SK-N-SH (cell line): ENCODE measurements at regions of chr17 and their contacts with region 1.

Region 1: DNA sequence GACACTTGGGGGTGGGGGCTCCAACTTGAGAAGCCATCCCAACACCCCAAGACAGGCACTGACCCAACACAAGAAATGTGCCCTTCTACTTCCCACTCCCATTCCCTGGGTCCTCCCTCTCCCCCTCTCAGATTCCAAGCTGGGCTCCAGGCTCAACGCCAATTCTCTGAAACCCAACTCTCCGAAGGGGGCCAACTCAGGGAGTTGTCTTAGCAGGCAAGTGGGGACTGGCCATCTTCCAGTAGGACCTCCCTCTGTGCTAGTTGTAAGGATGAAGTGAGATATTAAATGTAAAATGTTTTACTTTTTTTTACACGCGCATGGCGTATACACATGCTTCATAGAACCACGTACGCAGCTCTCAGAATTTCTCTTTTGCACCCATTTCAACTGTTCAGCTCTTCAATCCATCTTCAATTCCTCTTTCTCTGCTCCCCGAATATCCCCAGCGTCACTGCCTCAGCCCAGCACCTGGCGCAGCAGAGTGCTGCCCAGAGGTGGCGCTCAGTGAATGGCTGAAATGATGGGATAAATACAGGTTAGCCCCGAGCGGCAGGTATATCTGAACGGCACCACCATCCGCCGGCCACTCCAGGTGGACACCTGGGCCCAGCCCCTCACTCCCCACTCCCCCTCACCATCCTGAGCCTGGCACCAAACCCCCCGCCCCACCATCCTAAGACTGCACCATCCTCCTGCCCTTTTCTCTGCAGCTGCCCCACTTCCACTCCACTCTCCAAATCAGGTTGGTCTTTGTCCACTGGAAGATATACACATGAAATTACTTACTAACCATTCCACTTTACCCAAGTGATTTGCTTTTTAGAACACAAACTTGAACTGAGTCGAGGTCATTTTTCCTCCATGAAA is 43.9 kb upstream of the TNRC6C start:
- DNase-seq: no peak
- H3K4me3 ChIP-seq: no peak overlapping the region
- H3K27ac ChIP-seq: no peak overlapping the region
- H3K4me1 ChIP-seq: peaks cover 0 to 21% of the 10 kb centered on the region in 2 experiments; a peak in 2 of 4 replicates
- H3K27me3 ChIP-seq: peaks cover 41% of the 10 kb centered on the region
- CTCF ChIP-seq: no peak
- EP300 ChIP-seq: no peak
- RAD21 ChIP-seq: peak; percentile 35

Region 2: DNA sequence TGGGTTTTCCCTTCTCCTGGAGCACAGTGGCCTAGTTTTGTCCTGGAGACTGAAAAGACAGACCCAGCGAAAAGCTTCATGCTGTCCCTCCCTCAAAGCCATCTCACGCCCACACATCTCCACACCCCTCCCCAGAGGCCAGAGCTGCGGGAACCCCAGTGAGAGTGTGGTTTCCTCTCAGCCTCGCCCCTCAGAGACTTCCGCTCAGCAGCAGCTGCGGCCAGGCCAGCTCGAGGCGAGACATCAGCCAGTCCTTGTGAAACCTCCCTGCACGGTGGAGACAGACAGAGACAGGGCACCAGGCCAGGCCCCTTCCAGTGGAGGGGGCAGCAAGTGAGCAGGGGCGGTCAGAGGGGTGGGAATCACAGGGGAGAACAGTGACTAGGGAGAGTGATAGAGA is 33.1 kb before region 1 on chr17:
- CTCF ChIA-PET with region 1: interaction called, 10 read pairs
- POLR2A ChIA-PET with region 1: interaction called, 6 read pairs
- DNase-seq: peak; percentile 86
- H3K4me3 ChIP-seq: no peak overlapping the region
- H3K27ac ChIP-seq: peak overlapping the region; percentile 31 to 100; a peak in 3 of 4 replicates
- H3K4me1 ChIP-seq: peaks cover 14 to 67% of the 10 kb centered on the region in 2 experiments
- H3K27me3 ChIP-seq: 0 out of 2 replicates have a peak, but pooled peaks cover 6% of the 10 kb centered on the region
- CTCF ChIP-seq: no peak
- EP300 ChIP-seq: peak in 1 of 2 experiments; percentile 75; a peak in 2 of 4 replicates
- RAD21 ChIP-seq: peak; percentile 50

Region 3: GRCh38 chr17:77892469-77893143 is 22.0 kb before region 1 on chr17:
- CTCF ChIA-PET with region 1: interaction called, 20 read pairs
- POLR2A ChIA-PET with region 1: interaction called, 3 read pairs
- DNase-seq: peak; percentile 77
- H3K4me3 ChIP-seq: 0 out of 4 replicates have a peak overlapping the region, but pooled peaks of 1 of the 2 experiments have one; percentile 27
- H3K27ac ChIP-seq: no peak overlapping the region
- H3K4me1 ChIP-seq: peaks cover 0 to 3% of the 10 kb centered on the region in 2 experiments; a peak in 1 of 4 replicates
- H3K27me3 ChIP-seq: peaks cover 2% of the 10 kb centered on the region; the same call in 1 of the 2 replicates
- CTCF ChIP-seq: peak; percentile 55
- EP300 ChIP-seq: no peak
- RAD21 ChIP-seq: peak; percentile 40; the same call in 1 of the 2 replicates

Region 4: DNA sequence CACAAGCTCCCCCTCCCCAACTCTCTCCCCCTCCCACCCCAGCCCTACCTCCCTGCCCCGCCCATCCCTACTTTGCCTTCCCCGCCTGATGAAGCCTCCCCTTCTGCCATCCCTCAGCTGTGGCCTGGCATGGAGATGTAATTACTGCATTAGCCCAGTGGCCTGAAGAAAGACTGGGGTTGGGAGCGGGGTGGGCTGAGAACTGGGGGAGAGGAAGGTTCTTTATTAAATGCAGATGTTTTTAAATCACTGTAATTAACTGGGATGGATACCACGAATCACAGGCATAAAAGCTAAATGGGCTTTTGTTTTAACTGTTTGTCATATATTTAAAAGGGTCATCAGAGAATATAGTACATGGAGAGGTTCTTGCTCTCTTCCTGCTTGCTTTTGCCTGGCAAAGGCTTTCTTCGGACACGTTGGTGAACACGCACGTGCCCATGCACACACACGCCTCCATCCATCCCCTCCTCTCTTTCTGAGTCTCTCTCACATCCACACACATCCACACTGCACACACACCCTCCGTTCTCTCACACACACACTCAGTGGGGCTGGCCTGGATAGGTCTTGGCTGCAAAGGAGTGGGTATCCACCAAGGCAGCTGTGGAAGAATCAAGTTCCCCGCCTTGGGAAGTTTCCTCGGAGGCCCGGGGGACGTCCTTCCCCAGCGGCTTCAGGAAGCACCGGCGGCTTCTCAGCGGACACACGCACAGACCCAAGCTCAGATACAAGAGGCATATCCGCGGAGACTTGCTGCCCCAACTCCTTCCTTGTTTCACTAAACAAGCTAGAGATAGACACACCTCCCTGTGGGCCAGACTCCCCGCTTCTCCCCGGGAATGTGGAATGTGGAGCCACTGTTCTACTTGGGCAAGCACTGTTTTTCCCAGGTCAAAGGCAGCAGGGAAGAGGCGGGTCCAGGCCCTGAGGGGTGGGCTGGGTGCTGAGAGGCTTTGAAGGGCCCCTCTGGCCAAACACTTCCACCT is 16.5 kb after region 1 on chr17:
- CTCF ChIA-PET with region 1: interaction called, 10 read pairs
- POLR2A ChIA-PET with region 1: interaction called, 7 read pairs
- DNase-seq: peak; percentile 95
- H3K4me3 ChIP-seq: no peak overlapping the region
- H3K27ac ChIP-seq: peak overlapping the region in 1 of 2 experiments; percentile 78; a peak in 2 of 4 replicates
- H3K4me1 ChIP-seq: peaks cover 0 to 34% of the 10 kb centered on the region in 2 experiments; a peak in 1 of 4 replicates
- H3K27me3 ChIP-seq: peaks cover 23% of the 10 kb centered on the region
- CTCF ChIP-seq: no peak
- EP300 ChIP-seq: peak in 1 of 2 experiments; percentile 83; a peak in 2 of 4 replicates
- RAD21 ChIP-seq: peak; percentile 38

Region 5: GRCh38 chr17:77942112-77942988 is 27.7 kb after region 1 on chr17:
- CTCF ChIA-PET with region 1: no interaction called
- POLR2A ChIA-PET with region 1: no interaction called
- DNase-seq: no peak
- H3K4me3 ChIP-seq: no peak overlapping the region
- H3K27ac ChIP-seq: no peak overlapping the region
- H3K4me1 ChIP-seq: no peaks in the 10 kb centered on the region
- H3K27me3 ChIP-seq: peaks cover 42% of the 10 kb centered on the region; the same call in 1 of the 2 replicates
- CTCF ChIP-seq: no peak
- EP300 ChIP-seq: no peak
- RAD21 ChIP-seq: no peak

Region 6: DNA sequence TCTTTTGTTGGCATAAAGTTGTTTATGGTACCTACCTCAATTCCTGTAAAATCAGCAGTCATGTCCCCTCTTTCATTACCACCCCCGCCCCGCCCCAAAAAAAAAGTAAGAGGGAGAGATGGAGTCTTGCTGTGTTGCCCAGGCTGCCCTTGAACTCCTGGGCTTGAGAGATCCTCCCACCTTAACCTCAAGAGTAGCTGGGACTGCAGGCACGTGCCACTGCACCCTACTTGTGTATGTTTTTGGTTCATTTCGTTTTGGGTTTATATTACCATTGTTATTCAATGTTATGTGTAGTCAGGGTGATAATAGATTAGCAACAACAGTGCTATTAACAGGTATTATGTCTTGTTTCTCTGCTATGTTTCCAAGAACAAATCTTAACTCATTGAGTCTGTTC is 59.8 kb after region 1 on chr17:
- CTCF ChIA-PET with region 1: no interaction called
- POLR2A ChIA-PET with region 1: no interaction called
- DNase-seq: no peak
- H3K4me3 ChIP-seq: no peak overlapping the region
- H3K27ac ChIP-seq: no peak overlapping the region
- H3K4me1 ChIP-seq: no peaks in the 10 kb centered on the region
- H3K27me3 ChIP-seq: no peaks in the 10 kb centered on the region
- CTCF ChIP-seq: no peak
- EP300 ChIP-seq: no peak
- RAD21 ChIP-seq: no peak